Right cardiac atrium (tissue), 5 donors: ENCODE measurements at regions of chr17 and their contacts with region 1.

Region 1: DNA sequence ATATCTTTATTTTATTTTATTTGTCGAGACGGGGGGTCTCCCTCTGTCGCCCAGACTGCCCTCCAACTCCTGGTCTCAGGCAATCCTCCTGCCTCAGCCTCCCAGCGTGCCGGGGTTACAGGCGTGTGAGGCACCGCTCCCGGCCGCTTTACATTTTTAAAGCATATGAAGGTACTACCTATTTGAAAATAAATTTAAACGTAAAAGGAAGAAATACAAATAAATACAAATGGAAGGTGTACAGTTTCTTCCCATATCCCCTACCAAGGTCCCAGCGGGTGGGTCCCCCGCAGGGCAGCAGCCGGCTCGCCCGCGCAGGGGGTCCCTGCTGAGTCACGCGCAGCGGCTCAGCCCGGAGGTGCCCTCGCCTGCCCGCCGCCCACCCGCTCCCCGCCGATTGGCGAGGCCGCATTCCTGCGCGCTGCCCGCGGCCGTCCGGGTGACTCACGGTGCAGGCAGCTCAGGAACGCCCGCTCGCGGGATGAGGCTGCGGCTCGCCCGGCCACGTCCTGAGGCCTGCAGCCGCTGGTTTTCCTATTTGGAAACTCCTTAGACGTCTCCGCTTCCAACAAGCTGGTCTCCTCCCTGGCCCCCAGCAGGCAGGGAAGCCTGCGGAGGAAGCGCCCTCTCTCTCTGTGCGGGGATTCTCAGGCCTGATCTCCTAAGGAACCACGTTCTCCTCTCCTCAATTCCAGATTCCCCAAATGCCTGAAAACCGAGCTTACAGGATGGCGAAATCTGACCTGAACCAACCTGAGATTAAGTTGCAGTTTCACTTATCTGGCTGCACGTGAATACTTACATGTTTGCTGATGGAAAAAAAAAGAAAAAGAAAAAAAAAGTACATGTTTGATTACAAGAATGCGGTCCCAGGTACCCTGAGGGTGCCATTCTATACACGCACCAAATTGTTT is 54.9 kb upstream of the MAP3K14 start:
- DNase-seq: peak; percentile 87 to 93 (median 90)
- ATAC-seq: peak; percentile 96
- H3K4me3 ChIP-seq: no peak overlapping the region
- H3K27ac ChIP-seq: peak overlapping the region; percentile 95
- H3K4me1 ChIP-seq: peaks cover 3% of the 10 kb centered on the region
- H3K27me3 ChIP-seq: no peaks in the 10 kb centered on the region

Region 2: DNA sequence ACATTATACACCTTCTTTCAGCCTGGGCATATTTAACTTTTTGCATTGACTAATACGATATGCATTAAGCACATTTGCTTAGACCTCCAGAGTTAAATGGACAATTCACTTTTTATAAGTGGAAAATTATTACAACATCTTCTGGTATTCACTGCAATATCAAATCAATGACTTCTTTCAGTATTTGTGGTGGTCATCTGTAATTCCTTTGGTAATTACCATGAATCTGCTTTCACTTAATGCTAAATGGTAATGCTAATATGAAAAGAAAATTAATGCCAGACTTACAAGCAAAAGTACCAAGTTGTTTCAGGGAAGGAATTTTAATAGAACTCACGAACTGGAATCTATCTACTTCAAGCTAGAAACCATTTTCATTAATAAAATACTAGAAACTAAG is 874.9 kb before region 1 on chr17:
- intact Hi-C with region 1: no loop called
- DNase-seq: no peak
- ATAC-seq: no peak
- H3K4me3 ChIP-seq: no peak overlapping the region
- H3K27ac ChIP-seq: no peak overlapping the region
- H3K4me1 ChIP-seq: peaks cover 6% of the 10 kb centered on the region
- H3K27me3 ChIP-seq: no peaks in the 10 kb centered on the region

Region 3: DNA sequence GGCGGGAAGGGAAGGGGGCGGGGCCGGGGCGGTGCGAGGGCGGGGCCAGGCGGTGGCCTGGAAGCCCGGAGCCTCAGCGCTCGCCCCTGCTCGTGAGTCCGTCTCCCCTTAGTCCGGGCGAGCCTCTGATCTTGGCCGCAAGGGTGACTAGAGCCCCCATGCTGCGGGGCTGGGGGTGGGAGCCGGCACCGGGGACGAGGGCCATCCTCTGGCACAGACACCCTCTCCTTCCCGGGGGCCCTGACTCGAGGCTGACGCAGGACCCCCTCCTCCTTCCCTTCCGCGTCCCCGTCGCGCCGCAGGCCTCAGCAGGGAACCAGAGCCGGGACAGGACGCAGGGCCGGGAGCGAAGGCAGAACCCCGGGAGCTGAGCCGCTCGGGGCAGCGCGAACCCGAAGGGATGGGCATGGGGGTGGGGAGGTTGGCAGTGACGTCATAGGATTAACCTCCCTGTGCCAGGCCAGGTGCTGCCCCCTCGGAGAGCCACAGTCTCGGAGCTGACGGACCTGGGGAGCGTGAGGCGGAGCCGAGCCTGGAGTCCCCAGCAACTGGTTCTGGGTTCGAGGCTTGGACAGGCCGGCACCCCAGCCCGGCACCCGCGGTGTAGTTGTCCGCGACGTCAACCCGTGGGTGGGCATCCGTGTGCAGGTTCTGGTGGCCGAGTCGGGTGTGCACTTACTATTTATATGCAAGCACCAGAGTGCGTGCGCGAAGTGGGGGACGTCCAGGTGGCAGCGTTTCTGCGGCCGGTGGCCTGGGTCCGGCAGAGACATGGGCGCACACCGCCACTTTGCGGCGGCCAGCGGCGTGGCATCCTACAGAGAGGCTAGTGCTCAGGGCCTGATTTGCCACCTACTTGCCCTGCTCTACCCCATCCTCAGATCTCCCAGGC is 238.9 kb before region 1 on chr17:
- intact Hi-C with region 1: no loop called
- DNase-seq: peak; percentile 84 to 95 (median 94)
- ATAC-seq: peak; percentile 77
- H3K4me3 ChIP-seq: peak overlapping the region; percentile 94
- H3K27ac ChIP-seq: peak overlapping the region; percentile 53
- H3K4me1 ChIP-seq: peaks cover 6% of the 10 kb centered on the region
- H3K27me3 ChIP-seq: no peaks in the 10 kb centered on the region

Region 4: DNA sequence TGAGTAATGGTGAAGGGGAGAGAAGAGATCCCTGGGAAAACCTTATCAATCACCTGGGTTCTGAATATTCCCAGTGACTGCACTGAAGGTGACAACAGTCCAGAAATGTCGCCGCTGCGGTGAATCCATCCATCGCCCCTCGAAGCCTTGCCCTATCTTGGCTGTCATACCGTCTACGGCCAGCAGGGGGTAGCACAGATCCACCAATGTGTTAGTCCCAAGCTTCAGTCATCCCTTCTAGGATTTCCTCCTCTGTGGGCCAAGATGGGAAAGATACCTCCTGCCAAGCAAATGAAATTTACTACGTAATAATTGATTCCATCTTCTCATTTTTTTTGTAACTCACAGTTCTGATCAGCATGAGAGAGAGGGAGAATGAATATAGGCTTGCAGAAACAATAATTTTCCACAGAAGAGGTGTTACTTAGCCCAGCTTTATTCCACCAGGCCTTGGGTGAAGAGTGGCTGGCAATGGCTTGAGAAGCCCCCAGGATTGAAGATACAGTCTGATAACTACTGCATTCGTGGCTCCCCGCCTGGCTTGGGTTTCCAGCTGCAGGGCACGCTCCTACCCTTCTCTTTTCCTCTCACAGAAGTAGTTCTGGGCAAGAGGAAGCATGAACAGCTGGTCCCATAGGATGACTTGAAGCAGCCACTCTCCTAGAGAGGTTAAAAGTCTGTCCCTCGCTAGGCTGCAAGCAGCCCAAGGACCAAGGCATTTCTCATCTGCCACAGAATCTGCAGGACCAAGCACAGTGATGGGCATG is 152.6 kb before region 1 on chr17:
- intact Hi-C with region 1: no loop called
- DNase-seq: peak; percentile 82 to 95 (median 92)
- ATAC-seq: peak; percentile 75 to 81
- H3K4me3 ChIP-seq: no peak overlapping the region
- H3K27ac ChIP-seq: no peak overlapping the region
- H3K4me1 ChIP-seq: no peaks in the 10 kb centered on the region
- H3K27me3 ChIP-seq: no peaks in the 10 kb centered on the region

Region 5: GRCh38 chr17:45317112-45317928 is 54.4 kb before region 1 on chr17:
- intact Hi-C with region 1: loop called in 2 of 4 experiments (anchors 5 to 10 kb)
- DNase-seq: peak; percentile 100
- ATAC-seq: peak; percentile 94 to 95
- H3K4me3 ChIP-seq: peak overlapping the region; percentile 21
- H3K27ac ChIP-seq: peak overlapping the region; percentile 25
- H3K4me1 ChIP-seq: peaks cover 15% of the 10 kb centered on the region
- H3K27me3 ChIP-seq: no peaks in the 10 kb centered on the region